ENCODE measurements at regions of chr6 and their contacts with region 1.

Region 1: GRCh38 chr6:28266962-28267694 is at the start of gene ZSCAN26:
- DNase-seq: peak; percentile 78
- H3K4me3 Mint-ChIP-seq: no peak within 1 kb of the TSS
- H3K27ac Mint-ChIP-seq: no peak within 1 kb of the TSS
- H3K4me1 Mint-ChIP-seq: peaks cover 9% of the 10 kb centered on the region
- H3K27me3 Mint-ChIP-seq: peaks cover 2% of the 10 kb centered on the region
- total RNA-seq, gene ZSCAN26: 5.4 and 6.0 TPM in 2 replicates

Region 2: DNA sequence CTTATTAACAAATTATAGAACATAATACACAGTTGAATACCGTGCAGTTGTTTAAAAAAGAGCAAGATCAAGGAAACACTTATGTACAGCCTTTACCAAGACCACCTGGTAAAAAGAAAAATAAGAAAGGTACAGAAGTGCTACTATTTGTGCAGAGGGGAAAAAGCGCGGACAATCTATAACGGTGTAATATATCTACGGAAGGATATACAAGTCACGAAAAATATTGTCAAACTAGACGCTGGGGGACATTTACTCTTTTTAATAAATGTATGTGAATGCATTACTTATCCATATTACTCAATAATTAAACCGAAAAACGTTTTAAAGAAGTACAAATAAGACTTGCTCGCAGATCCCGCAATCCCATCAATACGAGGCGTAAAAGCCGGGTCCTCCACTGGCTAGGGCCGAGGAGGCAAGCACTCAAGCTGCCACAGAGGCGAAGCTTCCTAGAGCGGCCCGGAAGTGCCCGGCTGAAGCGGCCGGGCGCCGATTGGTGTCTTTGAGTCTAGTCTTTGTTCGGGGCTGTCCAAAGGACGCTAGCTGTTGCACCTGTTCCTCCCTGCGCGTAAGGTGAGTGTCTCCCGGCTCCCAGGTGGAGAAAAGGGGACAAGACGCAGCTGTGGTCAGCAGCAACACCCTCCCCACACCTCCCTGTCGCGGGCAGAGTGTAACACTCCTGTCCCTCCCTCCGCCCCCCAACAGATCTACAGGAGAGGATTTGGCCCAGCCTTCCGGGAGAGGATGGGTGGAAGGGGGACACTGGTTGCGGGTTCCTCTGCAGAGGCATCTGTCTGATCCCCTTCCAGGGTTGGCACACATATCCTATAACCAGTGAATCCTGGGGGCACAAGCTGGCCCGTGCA is 142.8 kb before region 1 on chr6 and contains the start of gene ZSCAN16:
- intact Hi-C with region 1: loop called (anchors 5 kb)
- DNase-seq: peak; percentile 66
- H3K4me3 Mint-ChIP-seq: peak within 1 kb of the TSS; percentile 95
- H3K27ac Mint-ChIP-seq: peak within 1 kb of the TSS; percentile 86
- H3K4me1 Mint-ChIP-seq: peaks cover 41% of the 10 kb centered on the region
- H3K27me3 Mint-ChIP-seq: no peaks in the 10 kb centered on the region
- total RNA-seq, gene ZSCAN16: 4.8 TPM in 2 replicates

Region 3: DNA sequence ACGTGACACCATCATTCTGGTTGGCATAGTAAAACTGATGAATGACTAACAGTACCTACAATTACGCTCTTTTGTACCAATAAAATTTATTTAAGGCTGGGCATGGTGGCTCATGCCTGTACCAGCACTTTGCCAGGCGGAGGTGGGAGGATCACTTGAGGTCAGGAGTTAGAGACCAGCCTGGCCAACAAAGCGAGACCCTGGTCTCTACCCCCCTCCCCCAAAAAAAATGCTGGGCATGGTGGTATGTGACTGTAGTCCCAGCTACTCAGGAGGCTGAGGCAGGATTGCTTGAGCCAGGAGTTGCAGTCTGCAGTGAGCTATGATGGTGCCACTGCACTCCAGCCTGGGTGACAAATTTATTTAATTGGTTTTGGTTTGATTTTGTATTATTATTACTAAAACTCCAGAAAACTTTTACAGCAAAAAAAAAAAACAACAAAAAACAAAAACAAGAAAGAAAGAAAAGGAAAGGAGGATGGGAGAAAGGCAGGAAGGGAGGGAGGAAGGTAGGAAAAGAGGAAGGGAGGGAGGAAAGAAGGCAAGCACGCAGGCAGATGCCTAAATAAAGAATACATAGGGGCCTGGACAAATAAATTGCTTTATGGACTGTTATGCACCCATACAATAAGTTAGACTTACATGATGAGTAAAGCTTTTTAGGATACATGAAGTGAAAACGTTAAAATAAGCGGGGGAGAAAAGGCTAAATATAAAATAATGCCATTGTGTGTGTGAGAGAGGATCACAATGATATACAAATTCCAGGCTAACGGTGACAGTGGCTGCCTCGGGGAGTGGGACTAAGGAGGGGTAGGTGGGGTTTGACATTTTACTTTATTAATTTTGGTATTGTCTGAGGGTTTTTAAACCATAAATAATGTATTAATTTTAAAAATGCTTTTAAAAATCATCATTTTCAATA is 42.7 kb before region 1 on chr6:
- intact Hi-C with region 1: loop called (anchors 5 kb)
- DNase-seq: no peak
- H3K4me3 Mint-ChIP-seq: peak overlapping the region; percentile 88
- H3K27ac Mint-ChIP-seq: peak overlapping the region; percentile 42
- H3K4me1 Mint-ChIP-seq: peaks cover 34% of the 10 kb centered on the region
- H3K27me3 Mint-ChIP-seq: peaks cover 34% of the 10 kb centered on the region

Region 4: GRCh38 chr6:28240471-28240870 is 26.7 kb before region 1 on chr6:
- intact Hi-C with region 1: no loop called
- DNase-seq: no peak
- H3K4me3 Mint-ChIP-seq: no peak overlapping the region
- H3K27ac Mint-ChIP-seq: no peak overlapping the region
- H3K4me1 Mint-ChIP-seq: no peaks in the 10 kb centered on the region
- H3K27me3 Mint-ChIP-seq: peaks cover 4% of the 10 kb centered on the region

Region 5: GRCh38 chr6:28335564-28336283 is 68.6 kb after region 1 on chr6 and contains the start of gene ZSCAN31:
- intact Hi-C with region 1: loop called (anchors 1 kb)
- DNase-seq: peak; percentile 56
- H3K4me3 Mint-ChIP-seq: no peak within 1 kb of the TSS
- H3K27ac Mint-ChIP-seq: no peak within 1 kb of the TSS
- H3K4me1 Mint-ChIP-seq: no peaks in the 10 kb centered on the region
- H3K27me3 Mint-ChIP-seq: peaks cover 7% of the 10 kb centered on the region
- total RNA-seq, gene ZSCAN31: 1.0 and 1.2 TPM in 2 replicates

Region 6: GRCh38 chr6:28349892-28350737 is 83.0 kb after region 1 on chr6 and contains the start of gene ZKSCAN3:
- intact Hi-C with region 1: loop called (anchors 2 kb)
- DNase-seq: peak; percentile 84
- H3K4me3 Mint-ChIP-seq: peak within 1 kb of the TSS; percentile 98
- H3K27ac Mint-ChIP-seq: peak within 1 kb of the TSS; percentile 91
- H3K4me1 Mint-ChIP-seq: peaks cover 28% of the 10 kb centered on the region
- H3K27me3 Mint-ChIP-seq: peaks cover 16% of the 10 kb centered on the region
- total RNA-seq, gene ZKSCAN3: 2.9 and 3.3 TPM in 2 replicates

Region 7: DNA sequence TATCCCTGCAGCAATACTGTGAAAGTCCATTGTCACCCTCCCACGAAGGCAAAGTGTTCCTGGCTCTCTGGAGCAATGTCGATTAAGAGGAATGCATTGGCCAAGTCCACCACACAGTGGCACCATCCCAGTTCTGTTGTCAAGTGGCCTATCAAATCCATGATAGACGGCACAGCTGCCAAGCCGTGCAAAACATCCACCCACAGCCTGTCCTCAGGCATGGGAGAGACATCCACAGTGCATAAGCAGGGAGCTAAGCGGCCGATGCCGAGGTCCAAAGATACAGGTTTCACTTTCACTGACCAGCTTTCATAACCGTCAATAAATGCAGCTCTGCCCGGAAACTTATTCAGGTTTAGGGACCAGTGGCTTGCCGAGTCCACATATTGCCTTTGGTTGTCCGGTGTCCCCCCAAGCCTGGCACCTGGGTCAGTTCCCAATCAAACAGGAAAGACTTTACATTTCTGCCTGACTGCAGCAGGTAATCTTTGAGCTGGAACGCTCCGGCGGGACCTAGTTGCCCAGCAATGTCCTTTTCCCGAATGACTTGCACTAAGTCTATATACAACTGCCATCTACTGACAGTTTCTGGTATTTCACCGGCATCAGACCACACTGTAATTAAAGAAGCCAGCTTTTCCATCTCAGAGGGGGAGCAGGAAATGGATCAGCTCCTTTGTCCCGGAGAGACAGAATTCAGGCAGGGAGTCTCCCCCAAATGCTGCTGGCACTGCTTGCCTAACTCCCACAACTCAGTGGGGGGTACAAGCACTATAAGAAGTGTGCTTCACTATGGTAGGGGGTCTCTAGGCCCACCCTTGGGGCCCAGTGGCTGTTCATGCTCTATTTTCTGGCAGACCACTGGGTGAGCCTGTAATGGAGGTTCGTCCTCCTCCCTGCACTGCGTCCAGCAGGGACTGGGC is 88.9 kb after region 1 on chr6:
- intact Hi-C with region 1: loop called (anchors 1 kb)
- DNase-seq: peak; percentile 48
- H3K4me3 Mint-ChIP-seq: peak overlapping the region; percentile 86
- H3K27ac Mint-ChIP-seq: peak overlapping the region; percentile 72
- H3K4me1 Mint-ChIP-seq: peaks cover 25% of the 10 kb centered on the region
- H3K27me3 Mint-ChIP-seq: no peaks in the 10 kb centered on the region

Region 8: GRCh38 chr6:28683944-28684538 is 416.9 kb after region 1 on chr6:
- intact Hi-C with region 1: loop called (anchors 10 kb)
- DNase-seq: no peak
- H3K4me3 Mint-ChIP-seq: no peak overlapping the region
- H3K27ac Mint-ChIP-seq: no peak overlapping the region
- H3K4me1 Mint-ChIP-seq: peaks cover 19% of the 10 kb centered on the region
- H3K27me3 Mint-ChIP-seq: peaks cover 65% of the 10 kb centered on the region

Measured in activated T-helper 1 cell treated with anti-CD3 and anti-CD28 coated beads, Interleukin-12 subunit alpha, Interleukin-12 subunit beta, Interleukin-2, Interleukin-4 antibody, amounts not matched to agents 30 ng/mL and 10 ng/mL and 1 ng/mL, durations not matched to agents 14 hours and 24 hours and 36 hours (primary cell).